ENCODE measurements at regions of chr6 and their contacts with region 1.

Region 1: DNA sequence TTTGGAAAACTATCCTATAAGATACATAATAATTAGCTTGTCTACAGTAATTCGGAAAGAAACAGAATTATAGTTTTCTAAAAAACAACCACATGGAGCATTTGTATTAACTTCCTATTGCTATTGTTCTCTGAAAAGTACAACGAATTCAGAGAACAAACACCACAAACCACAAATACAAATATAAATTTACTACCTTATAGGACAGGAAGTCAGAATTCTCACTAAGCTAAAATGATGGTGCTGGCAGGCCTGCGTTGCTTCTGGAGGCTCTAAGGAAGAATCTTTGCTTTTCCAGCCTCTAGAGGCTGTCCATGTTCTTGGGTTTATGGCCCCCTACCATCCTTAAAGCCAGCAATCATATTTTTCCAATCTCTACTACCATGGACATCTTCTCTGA is 173.6 kb upstream of the TCF21 start:
- DNase-seq: no peak
- ATAC-seq: no peak
- H3K4me3 ChIP-seq: no peak overlapping the region
- H3K27ac ChIP-seq: no peak overlapping the region
- H3K4me1 ChIP-seq: no peaks in the 10 kb centered on the region
- H3K27me3 ChIP-seq: no peaks in the 10 kb centered on the region
- CTCF ChIP-seq: no peak

Region 2: DNA sequence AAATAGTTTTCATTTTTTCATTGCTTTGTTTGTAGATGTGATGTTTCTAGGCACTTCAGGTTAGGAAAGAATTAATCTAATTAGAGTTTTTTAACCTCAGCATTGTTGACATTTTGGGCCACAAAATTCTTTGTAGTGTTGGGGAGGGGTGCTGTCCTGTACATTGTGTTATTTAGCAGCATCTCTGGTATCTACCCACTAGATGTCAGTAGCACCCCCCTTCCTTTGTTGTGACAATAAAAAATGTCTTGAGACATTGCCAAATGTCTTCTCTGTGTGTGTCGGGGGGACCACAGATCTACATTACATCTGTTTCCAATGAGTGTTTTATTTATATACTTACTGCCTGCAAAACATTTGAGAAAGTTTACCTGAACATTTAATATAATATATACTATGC is 428.5 kb before region 1 on chr6:
- CTCF ChIA-PET with region 1: no interaction called
- POLR2A ChIA-PET with region 1: no interaction called
- in situ Hi-C with region 1: no loop called
- intact Hi-C with region 1: no loop called
- DNase-seq: no peak
- ATAC-seq: no peak
- H3K4me3 ChIP-seq: no peak overlapping the region
- H3K27ac ChIP-seq: no peak overlapping the region
- H3K4me1 ChIP-seq: no peaks in the 10 kb centered on the region
- H3K27me3 ChIP-seq: no peaks in the 10 kb centered on the region
- CTCF ChIP-seq: no peak

Region 3: GRCh38 chr6:133645966-133646740 is 69.1 kb before region 1 on chr6:
- CTCF ChIA-PET with region 1: no interaction called
- POLR2A ChIA-PET with region 1: interaction called, 12 read pairs
- in situ Hi-C with region 1: no loop called
- intact Hi-C with region 1: no loop called
- DNase-seq: no peak
- ATAC-seq: no peak
- H3K4me3 ChIP-seq: no peak overlapping the region
- H3K27ac ChIP-seq: no peak overlapping the region
- H3K4me1 ChIP-seq: no peaks in the 10 kb centered on the region
- H3K27me3 ChIP-seq: no peaks in the 10 kb centered on the region
- CTCF ChIP-seq: no peak

Measured in Panc1 (cell line).